Right ventricle myocardium inferior (tissue), 1 donor: ENCODE measurements at regions of chr10 and their contacts with region 1.

Region 1: DNA sequence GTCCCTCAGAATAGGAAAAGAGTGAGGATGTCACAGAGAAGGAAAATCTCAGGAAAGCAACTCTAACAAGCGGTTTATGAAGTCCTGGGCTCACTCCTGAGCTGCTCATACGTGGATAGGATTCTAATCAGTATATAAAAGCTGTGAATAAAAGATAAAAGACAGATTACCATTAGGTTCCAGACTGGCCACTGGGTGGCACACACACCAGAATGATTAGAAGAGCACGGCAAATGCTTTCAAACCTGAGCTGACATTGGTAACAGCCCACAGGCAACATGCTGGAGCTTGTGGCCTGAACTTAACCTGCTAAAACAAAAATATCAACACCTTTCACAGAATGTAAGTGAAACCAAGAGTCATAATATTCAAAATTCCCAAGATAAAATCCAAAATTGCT is 370.8 kb downstream of the GRID1 start:
- DNase-seq: no peak
- ATAC-seq: no peak

Region 2: DNA sequence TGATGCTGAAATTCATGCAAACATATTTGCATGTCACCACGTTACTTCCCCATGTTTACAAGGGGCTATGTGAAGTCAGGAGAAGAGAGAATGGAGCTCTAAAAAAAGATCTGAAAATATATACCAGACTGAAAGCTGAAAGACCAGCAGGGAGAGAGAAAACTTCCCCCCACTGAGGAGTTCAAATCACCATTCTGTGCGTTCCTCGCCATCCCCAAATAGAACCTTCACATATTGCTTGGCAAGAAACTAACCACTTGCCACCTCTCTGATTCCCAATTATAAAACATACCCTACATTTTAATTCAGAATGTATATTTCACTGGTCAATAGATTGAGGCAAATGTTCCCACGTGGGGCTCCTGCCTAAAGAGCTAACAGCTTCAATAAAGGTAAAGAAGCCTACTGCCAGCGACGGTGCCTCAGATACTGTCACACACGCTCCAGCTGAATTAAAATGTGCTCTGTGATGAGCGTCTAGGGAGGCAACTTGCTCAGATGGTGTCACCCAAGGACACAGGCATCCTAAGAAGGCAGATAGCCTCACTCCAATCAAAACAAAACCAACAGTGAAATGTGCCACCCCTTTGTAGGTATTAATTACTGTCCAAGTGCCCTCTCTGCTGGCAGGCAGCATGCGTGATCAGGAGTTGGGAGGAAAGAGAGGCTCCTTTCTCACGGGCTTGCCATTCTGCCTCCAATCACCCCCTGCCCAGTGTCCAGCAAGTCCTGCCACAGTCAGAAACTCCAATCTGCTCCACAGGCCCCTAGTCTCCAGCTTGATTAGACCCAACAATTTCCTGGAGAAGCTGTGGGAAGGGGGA is 72.7 kb after region 1 on chr10:
- intact Hi-C with region 1: loop called (anchors 5 kb)
- DNase-seq: no peak
- ATAC-seq: no peak